Right lobe of liver (tissue), 6 donors: ENCODE measurements at regions of chr11 and their contacts with region 1.

Region 1: GRCh38 chr11:110356756-110357671 is 60.6 kb upstream of the RDX start:
- DNase-seq: peak in 1 of 3 donors; percentile 33
- ATAC-seq: peak; percentile 89 to 94 (median 92)
- H3K4me3 ChIP-seq: no peak overlapping the region
- H3K27ac ChIP-seq: peak overlapping the region in 2 of 3 donors; percentile 45 to 63
- H3K4me1 ChIP-seq: peaks cover 0 to 20% (median 6%) of the 10 kb centered on the region in 4 donors
- H3K27me3 ChIP-seq: no peaks in the 10 kb centered on the region
- CTCF ChIP-seq: no peak
- POLR2A ChIP-seq: no peak

Region 2: DNA sequence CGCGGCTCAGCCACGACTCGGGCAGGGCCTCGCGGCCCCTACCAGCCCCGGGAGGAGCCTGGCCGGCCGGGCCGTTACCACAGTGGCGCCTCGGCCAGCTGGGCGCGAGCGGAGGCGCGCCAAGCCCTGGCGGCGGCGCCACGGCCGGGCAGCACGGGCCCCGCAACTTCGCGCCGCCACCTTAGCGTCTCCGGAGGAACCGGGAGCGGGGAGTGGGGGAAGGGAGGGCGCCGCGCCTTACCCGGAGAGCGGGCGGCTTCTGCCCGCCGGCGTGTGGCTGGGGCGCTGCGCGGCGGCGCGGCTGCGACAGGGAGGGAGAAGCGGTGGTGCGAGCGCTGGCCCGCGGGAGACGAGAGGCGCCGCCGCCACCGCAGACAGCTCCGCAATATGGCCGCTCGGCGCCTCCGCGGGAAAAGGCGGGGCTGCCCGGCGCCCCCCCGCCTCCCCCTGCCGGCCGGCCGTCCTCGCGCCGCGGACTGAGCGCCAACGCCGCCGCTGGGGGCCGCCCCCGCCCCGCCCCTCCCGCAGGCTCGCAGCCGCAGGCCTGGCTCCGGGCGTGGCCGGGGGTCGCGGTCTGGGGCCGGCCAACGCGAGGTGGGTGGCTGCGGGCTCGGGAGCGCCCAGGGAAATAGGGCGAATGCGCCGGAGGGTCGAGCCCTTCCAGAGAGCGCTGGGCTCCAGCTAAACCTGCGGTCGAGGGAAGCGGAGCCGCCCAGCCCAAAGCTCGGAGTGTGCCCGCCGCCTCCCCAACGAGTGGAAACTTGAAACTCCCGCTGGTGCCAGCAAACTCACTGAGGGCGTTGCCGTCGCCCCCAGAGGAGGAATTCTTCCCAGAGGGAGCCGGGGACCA is 60.6 kb before region 1 on chr11 and contains the start of gene RDX:
- intact Hi-C with region 1: loop called (anchors 10 kb)
- DNase-seq: peak; percentile 80 to 84 (median 83)
- ATAC-seq: peak; percentile 71 to 84 (median 80)
- H3K4me3 ChIP-seq: peak within 1 kb of the TSS; percentile 66 to 86 (median 80)
- H3K27ac ChIP-seq: peak within 1 kb of the TSS; percentile 87 to 96 (median 95)
- H3K4me1 ChIP-seq: peaks cover 0 to 55% (median 10%) of the 10 kb centered on the region in 4 donors
- H3K27me3 ChIP-seq: no peaks in the 10 kb centered on the region
- CTCF ChIP-seq: peak in 2 of 4 donors; percentile 21 to 39
- POLR2A ChIP-seq: peak; percentile 58
- total RNA-seq, gene RDX: 47.1 to 87.8 (median 81.8) TPM

Region 3: GRCh38 chr11:110305169-110306018 is 51.6 kb before region 1 on chr11:
- intact Hi-C with region 1: loop called in 1 of 2 experiments (anchors 10 kb)
- DNase-seq: no peak
- ATAC-seq: peak in 1 of 4 donors; percentile 24
- H3K4me3 ChIP-seq: no peak overlapping the region
- H3K27ac ChIP-seq: no peak overlapping the region
- H3K4me1 ChIP-seq: peaks cover 0 to 8% (median 2%) of the 10 kb centered on the region in 4 donors
- H3K27me3 ChIP-seq: no peaks in the 10 kb centered on the region
- CTCF ChIP-seq: no peak
- POLR2A ChIP-seq: no peak

Region 4: DNA sequence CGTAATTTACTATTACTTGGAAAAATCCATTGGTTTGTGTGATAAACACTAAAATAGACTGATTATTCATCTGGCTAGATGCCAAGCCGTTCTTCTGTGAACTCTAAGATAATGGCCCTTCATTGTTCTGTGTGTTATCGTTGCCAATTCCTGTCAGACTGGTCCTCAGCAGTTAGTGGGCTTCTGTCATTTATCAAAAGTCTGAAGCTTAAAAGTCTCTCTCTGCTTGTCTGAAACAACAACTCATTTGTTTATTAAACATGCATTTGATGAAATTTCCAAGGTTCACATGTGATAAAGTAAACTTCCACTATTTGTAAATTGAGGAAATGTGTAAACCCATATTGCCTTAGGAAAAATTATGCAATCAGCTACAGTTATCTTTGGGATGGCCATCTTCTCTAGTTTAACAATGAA is 39.5 kb before region 1 on chr11:
- intact Hi-C with region 1: no loop called
- DNase-seq: no peak
- ATAC-seq: peak; percentile 64 to 84 (median 77)
- H3K4me3 ChIP-seq: no peak overlapping the region
- H3K27ac ChIP-seq: no peak overlapping the region
- H3K4me1 ChIP-seq: no peaks in the 10 kb centered on the region
- H3K27me3 ChIP-seq: no peaks in the 10 kb centered on the region
- CTCF ChIP-seq: no peak
- POLR2A ChIP-seq: no peak